Motor neuron (in vitro differentiated cells): ENCODE measurements at regions of chr12 and their contacts with region 1.

Region 1: GRCh38 chr12:13211859-13212664 is 15.5 kb downstream of the EMP1 start:
- ATAC-seq: peak in 6 of 8 experiments; percentile 3 to 68 (median 48)
- H3K4me3 ChIP-seq: no peak overlapping the region
- H3K27ac ChIP-seq: no peak overlapping the region
- H3K4me1 ChIP-seq: peaks cover 28 to 41% of the 10 kb centered on the region in 2 donors

Region 2: GRCh38 chr12:12916135-12916944 is 295.7 kb before region 1 on chr12:
- in situ Hi-C with region 1: loop called in 6 of 9 experiments (anchors 10 to 25 kb)
- ATAC-seq: peak; percentile 56 to 99 (median 98)
- H3K4me3 ChIP-seq: no peak overlapping the region
- H3K27ac ChIP-seq: no peak overlapping the region
- H3K4me1 ChIP-seq: peaks cover 7 to 12% of the 10 kb centered on the region in 2 donors

Region 3: DNA sequence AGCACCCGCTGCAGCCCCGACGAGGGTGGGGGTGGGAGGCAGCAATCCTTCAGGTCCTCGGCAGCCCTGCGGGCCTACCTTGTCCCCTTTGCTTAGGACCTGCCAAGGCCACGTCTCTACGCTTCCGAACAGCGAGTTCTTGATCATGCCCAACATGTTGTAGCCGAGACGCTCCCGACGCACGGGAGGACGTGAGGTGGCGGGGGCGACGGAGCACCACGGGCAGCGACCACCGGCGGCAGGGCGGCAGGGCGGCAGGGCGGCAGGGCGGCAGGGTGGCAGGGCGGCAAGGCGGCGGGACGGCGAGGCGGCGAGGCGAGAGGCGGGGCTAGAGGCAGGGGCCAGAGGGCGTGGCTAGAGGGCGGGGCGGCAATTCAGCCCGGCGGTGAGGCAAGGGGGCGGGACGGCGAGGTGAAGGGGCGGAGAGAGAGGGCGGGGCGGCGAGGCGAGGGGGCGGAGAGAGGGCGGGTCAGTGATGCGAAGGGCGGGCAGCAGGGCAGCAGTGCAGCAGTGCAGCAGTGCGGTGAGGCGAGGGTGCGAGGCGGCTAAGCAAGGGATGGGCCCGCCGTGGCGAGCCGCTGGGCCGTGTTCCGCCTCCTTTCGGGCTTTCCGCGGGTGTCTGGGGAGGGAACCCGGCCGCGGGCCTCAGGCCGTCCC is 212.0 kb before region 1 on chr12 and contains the start of gene HEBP1:
- in situ Hi-C with region 1: loop called in 1 of 9 experiments (anchors 25 kb)
- ATAC-seq: peak; percentile 81 to 93 (median 90)
- H3K4me3 ChIP-seq: peak within 1 kb of the TSS; percentile 46 to 68 (median 58)
- H3K27ac ChIP-seq: peak within 1 kb of the TSS; percentile 38 to 75
- H3K4me1 ChIP-seq: peaks cover 0 to 5% of the 10 kb centered on the region in 2 donors
- total RNA-seq, gene HEBP1: 6.8 to 25.3 (median 17.1) TPM

Region 4: DNA sequence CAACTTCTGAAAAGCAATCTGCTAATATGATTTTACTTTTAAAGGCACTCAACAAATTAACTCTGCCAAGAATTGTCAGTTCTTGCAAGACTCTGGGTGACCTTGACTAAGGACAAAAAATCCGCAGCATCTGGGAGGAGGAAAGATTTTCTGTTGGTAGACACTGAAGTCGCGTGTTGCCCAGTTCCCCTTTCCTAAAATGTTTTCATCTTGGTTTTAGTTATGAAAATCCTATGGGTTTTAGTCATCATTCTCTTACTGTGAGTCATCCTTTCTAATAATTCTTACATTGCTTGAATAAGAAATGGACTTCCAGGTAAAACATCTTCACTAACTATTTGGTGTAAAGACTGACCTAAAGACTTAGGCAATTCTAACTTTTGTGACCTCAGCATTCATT is 117.7 kb before region 1 on chr12:
- in situ Hi-C with region 1: loop called in 2 of 9 experiments (anchors 10 to 25 kb)
- ATAC-seq: no peak
- H3K4me3 ChIP-seq: no peak overlapping the region
- H3K27ac ChIP-seq: no peak overlapping the region
- H3K4me1 ChIP-seq: peaks cover 20 to 29% of the 10 kb centered on the region in 2 donors

Region 5: DNA sequence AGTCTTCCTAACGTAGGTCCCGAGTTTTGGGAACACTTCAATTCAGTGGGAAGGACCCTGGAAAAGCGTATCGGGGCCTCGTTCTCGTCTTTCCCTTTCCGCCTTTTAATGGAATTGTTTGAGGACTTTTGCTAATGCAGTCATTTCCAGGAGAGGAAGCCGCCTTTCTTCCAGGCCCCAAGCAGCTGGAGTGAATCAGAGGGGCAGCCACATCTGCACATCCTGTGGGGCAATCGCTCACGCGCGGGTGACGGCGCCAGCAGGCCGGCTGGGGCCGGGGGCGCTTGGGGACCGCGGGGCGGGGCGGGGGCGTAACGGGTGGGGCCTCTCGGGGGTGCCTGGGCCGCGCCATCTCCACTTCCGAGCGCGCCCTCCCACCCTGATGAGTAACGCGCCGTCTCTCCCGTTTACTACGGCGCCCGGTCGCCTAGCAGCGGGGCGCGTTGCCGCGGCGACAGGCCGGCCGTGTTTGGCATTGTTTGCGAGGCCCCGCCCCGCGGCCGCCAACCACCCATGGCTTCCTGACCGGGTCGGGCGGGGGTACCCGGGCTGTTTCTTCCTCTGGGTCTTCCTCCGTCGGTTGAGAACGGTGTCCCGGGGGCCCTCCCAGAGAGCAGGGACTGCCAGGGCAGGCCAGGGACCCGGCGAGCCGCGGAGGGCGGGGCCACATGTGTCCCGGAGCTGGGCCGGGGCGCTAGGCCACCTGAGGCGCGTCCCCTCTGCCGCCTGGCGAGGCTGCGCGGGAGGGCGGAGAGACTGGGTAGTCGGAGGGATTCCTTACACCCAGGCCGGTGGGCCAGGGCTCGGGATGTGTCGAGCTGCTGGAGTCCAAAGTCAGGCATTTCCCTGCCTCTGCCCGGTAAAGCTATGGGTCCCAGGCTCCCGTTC is 110.9 kb before region 1 on chr12:
- in situ Hi-C with region 1: loop called in 4 of 9 experiments (anchors 10 to 25 kb)
- ATAC-seq: peak; percentile 71 to 95 (median 92)
- H3K4me3 ChIP-seq: peak overlapping the region; percentile 29 to 43 (median 35)
- H3K27ac ChIP-seq: peak overlapping the region; percentile 77 to 88
- H3K4me1 ChIP-seq: peaks cover 36 to 45% of the 10 kb centered on the region in 2 donors